Activated naive CD8-positive, alpha-beta T cell treated with anti-CD3 and anti-CD28 coated beads, Interleukin-2, amount 10 ng/mL, durations not matched to agents 7 days and 5 days (primary cell): ENCODE measurements at regions of chr11 and their contacts with region 1.

Region 1: GRCh38 chr11:46700241-46701077 is at the starts of genes ARHGAP1 and ZNF408:
- DNase-seq: peak; percentile 98
- ATAC-seq: peak; percentile 90
- H3K4me3 Mint-ChIP-seq: peak within 1 kb of the TSS; percentile 99
- H3K27ac Mint-ChIP-seq: peak within 1 kb of the TSS; percentile 95
- H3K4me1 Mint-ChIP-seq: peaks cover 35% of the 10 kb centered on the region
- H3K27me3 Mint-ChIP-seq: no peaks in the 10 kb centered on the region
- total RNA-seq, gene ARHGAP1: 62.5 to 68.0 TPM
- total RNA-seq, gene ZNF408: 18.9 to 19.0 TPM

Region 2: DNA sequence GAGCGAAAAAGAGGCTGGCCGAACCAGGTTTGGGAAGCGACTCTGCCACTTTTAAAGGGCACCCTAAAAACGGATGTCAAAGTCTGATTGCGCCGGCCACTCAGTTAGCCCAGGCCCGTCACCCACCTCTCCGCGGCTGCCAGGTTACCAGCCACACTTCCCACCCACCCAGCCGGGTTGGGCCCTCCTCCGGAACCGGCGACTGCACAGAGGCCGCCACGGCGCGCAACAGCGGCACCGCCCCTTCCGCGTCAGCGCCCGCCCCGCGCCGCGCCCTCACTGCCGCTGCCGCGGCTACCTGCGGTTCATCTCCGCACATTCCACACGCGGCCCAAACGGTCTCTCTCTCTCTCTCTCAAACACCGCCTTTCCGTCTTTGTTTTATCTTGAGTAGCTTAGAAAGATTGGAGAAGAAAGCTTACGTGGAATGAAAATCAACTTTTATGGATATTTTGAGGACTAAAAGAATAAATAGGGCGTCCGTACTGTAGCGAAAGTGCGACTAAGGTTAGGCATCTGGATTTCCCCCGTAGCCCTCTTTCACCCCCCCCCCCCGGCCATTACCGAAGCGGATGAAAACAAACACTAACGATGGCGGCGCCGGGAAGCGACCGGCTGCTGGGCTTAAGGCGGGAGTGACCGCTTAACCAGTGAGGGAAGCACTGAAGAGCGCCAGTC is 83.3 kb before region 1 on chr11 and contains the starts of genes ATG13 and HARBI1:
- POLR2A ChIA-PET with region 1: interaction called, 14 read pairs
- DNase-seq: peak; percentile 94
- ATAC-seq: peak; percentile 96
- H3K4me3 Mint-ChIP-seq: peak within 1 kb of the TSS; percentile 100
- H3K27ac Mint-ChIP-seq: peak within 1 kb of the TSS; percentile 99
- H3K4me1 Mint-ChIP-seq: peaks cover 23% of the 10 kb centered on the region
- H3K27me3 Mint-ChIP-seq: no peaks in the 10 kb centered on the region
- total RNA-seq, gene ATG13: 64.1 to 70.0 TPM
- total RNA-seq, gene HARBI1: 5.8 to 7.6 TPM

Region 3: GRCh38 chr11:46675288-46675851 is 25.1 kb before region 1 on chr11:
- POLR2A ChIA-PET with region 1: interaction called, 31 read pairs
- DNase-seq: no peak
- ATAC-seq: no peak
- H3K4me3 Mint-ChIP-seq: no peak overlapping the region
- H3K27ac Mint-ChIP-seq: peak overlapping the region; percentile 92
- H3K4me1 Mint-ChIP-seq: peaks cover 45% of the 10 kb centered on the region
- H3K27me3 Mint-ChIP-seq: no peaks in the 10 kb centered on the region